Cardiac septum (tissue), 1 donor: ENCODE measurements at regions of chr5 and their contacts with region 1.

Region 1: GRCh38 chr5:122845229-122846050 is at the start of gene SNX24:
- DNase-seq: peak; percentile 93
- total RNA-seq, gene SNX24: 14.0 TPM

Region 2: DNA sequence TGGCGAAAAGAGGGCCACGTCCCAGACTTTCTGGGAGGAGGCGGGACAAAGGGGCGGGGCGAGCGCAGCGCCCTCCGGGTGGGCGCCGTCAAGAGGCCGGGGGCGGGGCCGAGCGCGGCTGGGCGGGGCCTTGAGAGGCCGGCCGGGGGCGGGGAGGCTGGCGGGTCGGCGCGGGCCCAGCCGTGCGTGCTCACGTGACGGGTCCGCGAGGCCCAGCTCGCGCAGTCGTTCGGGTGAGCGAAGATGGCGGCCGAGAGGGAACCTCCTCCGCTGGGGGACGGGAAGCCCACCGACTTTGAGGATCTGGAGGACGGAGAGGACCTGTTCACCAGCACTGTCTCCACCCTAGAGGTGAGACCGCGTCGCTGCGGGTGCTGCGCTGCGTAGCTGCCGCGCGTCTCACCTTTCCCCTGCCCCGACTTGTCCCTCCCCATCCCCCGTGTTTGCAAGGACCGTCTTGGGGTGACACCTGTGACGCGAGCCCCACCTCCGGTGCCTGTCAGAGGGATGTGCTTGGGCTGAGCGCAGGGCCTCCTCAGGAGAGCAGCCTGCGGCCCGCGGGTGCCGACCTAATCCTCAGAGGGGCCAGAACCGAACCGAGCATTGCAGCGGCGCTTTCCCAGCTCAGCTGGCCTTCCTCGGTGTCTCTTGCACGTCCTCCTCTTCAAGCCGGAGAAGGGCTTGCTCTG is 70.4 kb before region 1 on chr5 and contains the start of gene SNX2:
- intact Hi-C with region 1: loop called (anchors 2 kb)
- DNase-seq: peak; percentile 95
- total RNA-seq, gene SNX2: 28.8 TPM

Region 3: GRCh38 chr5:123012321-123012720 is 166.9 kb after region 1 on chr5:
- intact Hi-C with region 1: no loop called
- DNase-seq: no peak